ENCODE measurements at regions of chr3 and their contacts with region 1.

Region 1: DNA sequence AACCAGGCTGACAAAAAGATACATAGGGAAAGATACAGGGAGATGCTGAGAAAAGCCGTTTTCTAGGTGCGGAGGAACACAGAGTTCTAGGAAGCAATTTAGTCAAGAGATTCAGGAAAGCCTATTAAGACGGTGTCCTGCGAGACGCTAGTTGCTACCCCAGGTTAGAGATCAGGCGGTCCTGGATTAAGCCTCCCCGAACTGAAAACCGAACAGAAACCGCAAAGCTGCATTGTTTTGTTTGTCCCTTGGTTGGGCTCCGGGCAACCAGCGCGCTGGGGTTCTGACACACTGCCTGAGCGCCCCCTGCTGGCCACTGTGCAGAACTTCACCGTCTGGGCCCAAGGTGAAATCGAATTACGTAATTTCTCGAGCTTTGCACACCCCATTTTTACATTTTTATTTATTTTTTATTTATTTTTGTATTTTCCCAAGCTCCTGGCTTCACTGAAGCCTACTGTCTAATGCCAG is 37.3 kb upstream of the NDUFB4 start:
- H3K4me3 ChIP-seq: peak overlapping the region; percentile 43
- H3K27ac ChIP-seq: no peak overlapping the region
- H3K4me1 ChIP-seq: no peaks in the 10 kb centered on the region
- CTCF ChIP-seq: peak; percentile 65; the same call in 1 of the 2 replicates

Region 2: DNA sequence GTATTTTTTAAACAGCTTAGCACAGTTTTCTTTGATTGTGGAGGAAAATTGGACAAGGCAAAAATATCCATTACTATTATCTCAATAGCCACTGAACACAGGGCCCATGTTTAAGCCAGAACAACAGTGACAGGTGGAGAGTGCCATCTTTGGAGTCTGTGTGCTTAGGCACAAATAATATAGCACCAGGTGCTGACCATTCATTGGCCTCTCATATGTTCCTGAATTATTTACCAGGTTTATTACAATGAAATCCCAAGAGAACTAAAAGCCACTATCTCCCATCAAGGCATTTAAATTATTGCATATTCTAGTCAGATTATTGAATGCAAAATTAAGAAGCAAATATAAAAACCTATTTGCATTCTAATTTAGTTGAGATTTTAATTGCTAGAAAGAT is 313.4 kb before region 1 on chr3:
- CTCF ChIA-PET with region 1: interaction called, 35 read pairs
- POLR2A ChIA-PET with region 1: no interaction called
- H3K4me3 ChIP-seq: no peak overlapping the region
- H3K27ac ChIP-seq: no peak overlapping the region
- H3K4me1 ChIP-seq: no peaks in the 10 kb centered on the region
- CTCF ChIP-seq: no peak

Region 3: GRCh38 chr3:120357807-120358206 is 201.0 kb before region 1 on chr3:
- CTCF ChIA-PET with region 1: interaction called, 10 read pairs
- POLR2A ChIA-PET with region 1: no interaction called
- H3K4me3 ChIP-seq: no peak overlapping the region
- H3K27ac ChIP-seq: no peak overlapping the region
- H3K4me1 ChIP-seq: no peaks in the 10 kb centered on the region
- CTCF ChIP-seq: no peak

Region 4: DNA sequence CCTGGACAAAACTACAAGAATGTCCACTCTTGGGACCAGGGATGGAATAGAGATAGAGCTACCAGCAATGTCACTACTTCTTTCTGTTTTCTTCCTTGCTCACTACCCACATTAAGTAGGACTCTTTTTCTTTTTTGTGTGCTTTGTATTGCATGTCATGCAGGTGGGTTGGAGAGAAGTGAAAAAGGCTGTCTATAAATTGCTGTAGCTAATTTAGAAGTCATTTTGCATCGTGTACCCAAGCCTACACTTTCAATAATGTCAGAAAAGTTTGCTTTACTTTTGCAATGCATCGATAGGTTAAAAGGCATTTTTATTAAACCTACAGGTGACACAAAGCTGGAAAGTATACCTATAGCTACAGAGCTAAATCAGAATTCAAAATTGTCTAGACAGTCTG is 242.7 kb after region 1 on chr3:
- CTCF ChIA-PET with region 1: no interaction called
- POLR2A ChIA-PET with region 1: no interaction called
- H3K4me3 ChIP-seq: no peak overlapping the region
- H3K27ac ChIP-seq: no peak overlapping the region
- H3K4me1 ChIP-seq: no peaks in the 10 kb centered on the region
- CTCF ChIP-seq: no peak